Kidney (tissue), 22 donors: ENCODE measurements at regions of chr16 and their contacts with region 1.

Region 1: DNA sequence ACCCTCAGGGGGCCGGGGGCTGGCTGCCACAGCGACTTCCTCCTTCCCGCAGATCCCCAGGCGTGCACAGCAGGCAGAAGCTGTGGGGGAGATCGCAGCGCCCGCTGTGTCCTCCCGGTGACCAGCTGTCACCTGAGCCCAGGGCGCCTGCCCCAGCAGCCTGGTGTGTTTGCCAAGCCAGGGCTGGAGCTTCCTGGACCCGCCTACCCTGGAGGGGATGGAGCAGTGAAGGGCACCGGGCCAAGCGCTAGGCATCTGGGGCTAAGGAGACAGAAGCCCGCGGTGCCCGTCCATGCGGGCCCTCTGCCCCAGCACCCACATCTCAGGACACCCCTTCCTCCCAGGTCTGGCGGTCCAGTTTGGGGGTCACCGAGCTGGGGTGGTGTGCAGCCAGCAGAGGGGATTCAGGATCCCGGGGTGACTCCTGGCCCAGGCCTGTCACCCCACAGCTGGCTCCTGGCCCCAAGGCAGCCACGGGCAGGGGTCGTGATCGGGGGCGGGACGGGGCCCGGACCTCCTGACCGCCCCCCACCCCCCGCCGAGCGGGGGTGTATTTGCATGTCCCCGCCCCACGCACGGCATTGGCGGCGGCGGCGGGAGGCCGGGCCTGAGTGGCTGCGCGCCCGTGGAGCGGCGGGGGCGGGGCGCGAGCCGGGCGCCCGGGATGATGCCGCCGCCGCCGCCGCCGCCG is at the start of gene RAB26:
- DNase-seq: peak; percentile 85 to 95 (median 88)
- H3K4me3 ChIP-seq: peak within 1 kb of the TSS in 1 of 3 donors; percentile 29
- H3K27ac ChIP-seq: peak within 1 kb of the TSS; percentile 45 to 69
- H3K4me1 ChIP-seq: peaks cover 0 to 38% (median 6%) of the 10 kb centered on the region in 3 donors
- H3K27me3 ChIP-seq: no peaks in the 10 kb centered on the region
- CTCF ChIP-seq: no peak
- total RNA-seq, gene RAB26: 1.5 TPM

Region 2: DNA sequence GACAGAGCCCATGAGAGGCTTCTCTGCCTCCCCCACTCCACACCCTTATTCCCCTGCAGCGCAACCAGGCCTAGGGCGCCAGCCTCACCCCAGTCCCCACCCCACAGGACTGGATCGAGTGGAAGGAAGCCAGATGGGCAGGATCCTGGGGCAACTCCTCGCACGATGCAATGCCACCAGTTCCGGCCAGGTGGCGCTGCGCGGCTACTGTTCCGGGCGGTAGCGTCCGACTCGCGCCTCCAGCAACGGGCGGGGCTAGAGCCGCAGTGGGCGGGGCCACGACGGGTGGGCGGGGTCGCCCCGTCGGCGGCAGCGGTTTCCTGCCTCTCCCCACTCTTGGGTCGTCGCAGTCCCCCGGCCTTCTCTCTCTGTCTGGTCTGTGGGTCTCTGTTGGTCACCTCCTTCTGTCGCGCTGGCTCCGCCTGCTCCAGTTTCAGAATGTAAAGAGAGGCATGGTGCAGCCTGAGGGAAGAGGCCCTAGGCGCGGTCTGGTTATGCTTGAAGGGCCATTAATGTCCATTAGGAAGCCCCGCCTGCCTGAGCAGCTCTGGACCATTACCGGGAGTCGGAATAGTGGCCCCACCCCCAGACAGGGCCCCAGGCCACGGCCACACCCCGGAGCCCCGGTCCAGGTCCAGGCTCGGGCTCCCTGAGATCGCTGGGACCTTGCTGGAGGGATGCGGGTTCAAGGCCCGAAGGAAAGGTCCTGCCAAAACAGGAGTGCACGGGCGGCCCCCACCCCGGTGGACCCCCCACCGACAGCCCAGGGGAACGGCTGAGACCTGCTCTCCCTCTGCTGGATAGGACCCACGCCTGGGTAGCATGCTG is 124.8 kb before region 1 on chr16:
- intact Hi-C with region 1: loop called (anchors 10 kb)
- DNase-seq: peak; percentile 95 to 98 (median 96)
- H3K4me3 ChIP-seq: peak overlapping the region in 2 of 3 donors; percentile 37 to 52
- H3K27ac ChIP-seq: peak overlapping the region; percentile 20 to 69
- H3K4me1 ChIP-seq: peaks cover 0 to 41% (median 0%) of the 10 kb centered on the region in 3 donors
- H3K27me3 ChIP-seq: no peaks in the 10 kb centered on the region
- CTCF ChIP-seq: peak; percentile 99